Activated CD8-positive, alpha-beta memory T cell treated with anti-CD3 and anti-CD28 coated beads, Interleukin-2, amount 10 ng/mL, durations not matched to agents 7 days and 5 days (primary cell): ENCODE measurements at regions of chr14 and their contacts with region 1.

Region 1: DNA sequence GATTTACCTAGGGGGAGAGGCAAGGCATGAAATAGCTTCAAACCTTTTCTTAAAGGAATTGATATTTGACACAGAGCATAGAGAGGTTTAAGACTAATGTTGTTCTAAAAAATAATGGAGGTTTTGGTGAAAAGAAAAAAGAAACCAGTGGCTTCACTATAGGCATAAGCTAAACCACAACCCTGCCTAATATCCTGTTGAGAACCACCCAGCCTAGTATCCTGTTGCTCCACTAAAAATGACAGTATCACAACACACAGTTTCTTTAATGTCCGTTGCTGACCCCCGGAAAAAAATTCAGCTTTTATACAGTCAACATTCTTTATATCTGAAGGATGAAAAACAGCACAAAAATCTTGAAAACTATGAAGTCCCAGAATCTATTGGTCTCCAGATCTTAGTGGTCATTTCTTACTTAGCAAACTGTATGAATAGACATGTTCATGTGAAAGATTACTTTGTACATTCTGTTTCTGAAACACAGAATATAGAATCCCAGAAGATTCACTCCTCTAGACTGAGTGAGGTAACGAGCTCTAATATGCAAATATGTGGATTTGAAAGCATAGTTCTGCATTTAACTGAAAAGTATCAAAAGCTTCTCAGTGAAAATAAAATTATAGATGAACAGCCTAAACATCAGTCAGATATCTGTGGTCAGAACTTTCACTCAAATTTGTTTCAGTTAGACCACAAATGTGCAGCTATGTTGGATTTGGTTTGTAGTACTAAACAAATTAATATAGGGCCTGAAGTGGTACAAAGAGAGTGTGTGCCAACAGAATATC is 40.5 kb downstream of the GALC start:
- DNase-seq: peak; percentile 46
- ATAC-seq: peak; percentile 91
- H3K4me3 Mint-ChIP-seq: peak overlapping the region; percentile 70
- H3K27ac Mint-ChIP-seq: peak overlapping the region; percentile 91
- H3K4me1 Mint-ChIP-seq: peaks cover 38% of the 10 kb centered on the region
- H3K27me3 Mint-ChIP-seq: no peaks in the 10 kb centered on the region

Region 2: DNA sequence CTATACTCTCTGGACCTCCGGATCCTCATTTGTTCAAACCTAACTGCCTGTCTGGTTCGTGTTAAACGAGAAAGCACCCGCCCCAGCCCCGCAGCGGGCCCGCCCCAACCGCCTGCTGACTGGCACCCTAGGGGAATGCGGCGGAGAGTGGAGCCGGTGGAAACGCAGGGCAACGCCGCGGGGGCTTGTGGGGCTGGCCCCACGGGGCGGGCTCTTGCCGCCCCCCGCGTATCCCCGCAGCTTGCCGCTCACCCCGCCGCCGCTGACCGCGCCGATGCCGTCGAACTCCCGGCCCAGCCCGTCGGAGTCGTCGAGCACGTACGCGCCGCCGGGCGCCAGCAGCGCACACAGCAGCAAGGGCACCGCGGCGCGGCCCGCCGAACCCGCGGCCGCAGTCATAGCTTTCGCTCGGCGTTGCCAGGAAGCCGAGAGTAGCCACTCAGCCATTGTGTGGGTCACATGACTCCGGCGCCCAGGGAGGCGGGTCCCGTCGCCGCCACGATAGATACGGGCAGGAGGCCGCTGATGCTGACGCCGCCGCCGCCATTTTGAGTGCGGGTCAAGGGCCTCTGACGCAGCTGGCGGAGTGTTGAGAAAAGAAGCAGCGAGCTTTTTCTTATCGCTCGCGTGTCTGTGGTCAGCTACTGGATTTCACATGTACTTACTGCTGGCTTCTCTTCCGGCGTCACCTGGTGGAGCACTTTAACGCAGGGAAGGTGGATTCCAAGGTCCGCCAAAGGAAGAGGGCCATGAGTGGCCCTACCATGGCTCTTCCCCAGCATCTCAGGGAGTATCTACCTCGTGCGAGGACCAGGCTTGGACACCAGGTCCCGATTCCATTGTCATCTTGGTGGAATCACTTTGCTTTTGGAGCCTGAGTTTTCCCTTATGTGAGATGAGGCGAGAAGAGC is 40.5 kb after region 1 on chr14 and contains the start of gene GALC:
- CTCF ChIA-PET with region 1: interaction called, 23 read pairs
- DNase-seq: peak; percentile 98
- ATAC-seq: peak; percentile 90
- H3K4me3 Mint-ChIP-seq: peak within 1 kb of the TSS; percentile 93
- H3K27ac Mint-ChIP-seq: peak within 1 kb of the TSS; percentile 96
- H3K4me1 Mint-ChIP-seq: peaks cover 53% of the 10 kb centered on the region
- H3K27me3 Mint-ChIP-seq: no peaks in the 10 kb centered on the region
- total RNA-seq, gene GALC: 20.6 to 25.7 TPM

Region 3: GRCh38 chr14:88005978-88006851 is 53.7 kb after region 1 on chr14:
- CTCF ChIA-PET with region 1: interaction called, 14 read pairs
- DNase-seq: peak; percentile 87
- ATAC-seq: peak; percentile 93
- H3K4me3 Mint-ChIP-seq: peak overlapping the region; percentile 95
- H3K27ac Mint-ChIP-seq: peak overlapping the region; percentile 97
- H3K4me1 Mint-ChIP-seq: peaks cover 64% of the 10 kb centered on the region
- H3K27me3 Mint-ChIP-seq: no peaks in the 10 kb centered on the region

Region 4: DNA sequence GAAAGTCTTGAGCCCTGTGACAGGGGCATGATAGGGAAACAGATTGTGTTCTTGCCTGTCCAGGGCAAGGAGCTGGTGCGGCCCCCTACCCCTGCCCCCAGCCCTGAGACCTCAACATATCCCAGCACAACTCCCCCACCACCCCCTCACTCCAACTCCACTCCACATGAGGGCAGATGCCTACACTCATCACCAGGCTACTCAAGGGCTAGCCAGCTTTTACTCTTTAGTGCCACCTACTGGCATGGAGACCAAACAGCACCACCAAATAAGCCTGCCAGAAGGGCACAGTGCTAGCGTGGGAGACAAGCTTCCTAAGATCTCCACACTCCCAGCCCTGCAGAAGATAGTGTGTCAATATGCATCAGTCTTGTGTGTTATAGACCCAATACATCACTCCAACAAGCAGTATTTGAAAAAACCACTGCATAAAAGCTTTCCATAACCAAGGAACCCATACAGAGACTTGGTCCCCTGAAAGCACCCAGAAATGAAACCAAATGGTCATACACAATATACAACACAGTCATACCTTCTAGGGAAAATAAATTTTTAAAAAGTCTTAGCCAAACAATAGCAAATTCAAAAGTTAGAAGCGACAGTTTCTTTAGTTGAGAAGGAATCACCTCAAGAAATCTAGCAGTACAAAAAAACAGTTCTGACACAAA is 216.1 kb after region 1 on chr14:
- CTCF ChIA-PET with region 1: interaction called, 59 read pairs
- DNase-seq: peak; percentile 66
- ATAC-seq: peak; percentile 86
- H3K4me3 Mint-ChIP-seq: peak overlapping the region; percentile 37
- H3K27ac Mint-ChIP-seq: no peak overlapping the region
- H3K4me1 Mint-ChIP-seq: peaks cover 29% of the 10 kb centered on the region
- H3K27me3 Mint-ChIP-seq: peaks cover 26% of the 10 kb centered on the region